MCF 10A (cell line): ENCODE measurements at regions of chr5 and their contacts with region 1.

Region 1: DNA sequence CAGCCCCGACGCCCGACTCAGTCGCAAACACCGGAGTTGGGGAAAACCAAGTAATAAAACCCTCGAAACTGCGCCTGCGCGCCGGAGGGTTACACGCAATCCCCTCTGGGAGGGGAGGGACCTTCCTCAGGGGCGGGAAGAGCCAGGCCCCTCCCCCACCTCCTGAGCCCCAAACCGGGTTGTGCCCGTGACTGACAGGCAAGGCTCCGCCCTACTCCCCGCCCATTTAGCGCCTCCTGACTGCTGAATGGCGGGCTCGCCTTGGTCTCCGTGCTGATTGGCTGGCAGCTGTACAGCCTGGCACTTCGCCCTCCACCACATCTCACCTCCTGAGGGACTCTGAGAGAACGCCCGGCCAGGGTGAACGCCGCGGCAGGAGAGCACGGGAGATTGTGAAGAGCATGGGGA is at the start of gene PRDM9:
- DNase-seq: peak; percentile 85
- H3K4me3 Mint-ChIP-seq: peak within 1 kb of the TSS; percentile 88
- H3K27ac Mint-ChIP-seq: peak within 1 kb of the TSS; percentile 88
- H3K4me1 Mint-ChIP-seq: no peaks in the 10 kb centered on the region
- H3K27me3 Mint-ChIP-seq: no peaks in the 10 kb centered on the region
- CTCF ChIP-seq: no peak
- total RNA-seq, gene PRDM9: not detected in 2 replicates

Region 2: DNA sequence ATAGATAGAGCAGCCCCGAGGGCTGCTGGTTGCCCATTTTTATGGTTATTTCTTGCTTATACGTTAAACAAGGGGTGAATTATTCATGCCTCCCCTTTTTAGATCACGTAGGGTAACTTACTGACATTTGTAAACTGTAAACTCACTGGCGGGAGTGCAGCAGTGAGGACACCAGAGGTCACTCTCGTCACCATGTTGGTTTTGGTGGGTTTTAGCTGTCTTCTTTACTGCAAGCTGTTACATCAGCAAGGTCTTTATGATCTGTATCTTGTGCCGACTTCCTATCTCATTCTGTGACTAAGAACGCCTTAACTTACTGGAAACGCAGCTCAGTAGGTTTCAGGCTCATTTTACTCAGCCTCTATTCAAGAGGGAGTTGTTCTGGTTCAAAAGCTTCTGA is 154.8 kb before region 1 on chr5:
- CTCF ChIA-PET with region 1: interaction called, 5 read pairs
- POLR2A ChIA-PET with region 1: no interaction called
- intact Hi-C with region 1: loop called (anchors 1 kb)
- DNase-seq: peak; percentile 39
- H3K4me3 Mint-ChIP-seq: no peak overlapping the region
- H3K27ac Mint-ChIP-seq: no peak overlapping the region
- H3K4me1 Mint-ChIP-seq: no peaks in the 10 kb centered on the region
- H3K27me3 Mint-ChIP-seq: no peaks in the 10 kb centered on the region
- CTCF ChIP-seq: peak; percentile 34

Region 3: DNA sequence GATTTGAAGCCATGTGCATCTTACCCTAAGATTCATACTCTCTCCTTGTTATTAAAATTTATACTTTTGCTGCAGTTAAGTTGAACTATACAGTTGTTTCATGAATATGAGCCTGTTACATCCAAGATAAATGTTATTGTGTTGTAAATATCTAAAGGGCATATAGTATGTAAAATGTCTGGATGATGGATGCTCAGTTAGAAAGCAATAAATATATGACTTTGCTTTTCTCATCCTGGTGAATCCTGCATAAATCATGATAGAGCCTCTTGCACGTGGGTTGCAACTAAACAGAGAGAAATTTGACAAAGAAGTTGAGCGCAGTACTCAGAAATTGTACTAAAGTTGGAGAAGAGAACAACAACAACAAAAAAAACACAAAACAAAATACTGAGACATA is 99.6 kb after region 1 on chr5:
- CTCF ChIA-PET with region 1: no interaction called
- POLR2A ChIA-PET with region 1: no interaction called
- intact Hi-C with region 1: no loop called
- DNase-seq: no peak
- H3K4me3 Mint-ChIP-seq: no peak overlapping the region
- H3K27ac Mint-ChIP-seq: no peak overlapping the region
- H3K4me1 Mint-ChIP-seq: no peaks in the 10 kb centered on the region
- H3K27me3 Mint-ChIP-seq: no peaks in the 10 kb centered on the region
- CTCF ChIP-seq: no peak